ENCODE measurements at regions of chrX and their contacts with region 1.

Region 1: GRCh38 chrX:134484039-134484438 is 24.1 kb downstream of the HPRT1 start:
- DNase-seq: no peak
- H3K4me3 Mint-ChIP-seq: no peak overlapping the region
- H3K27ac Mint-ChIP-seq: no peak overlapping the region
- H3K4me1 Mint-ChIP-seq: no peaks in the 10 kb centered on the region
- H3K27me3 Mint-ChIP-seq: no peaks in the 10 kb centered on the region

Region 2: GRCh38 chrX:134764212-134764785 is 280.3 kb after region 1 on chrX:
- CTCF ChIA-PET with region 1: interaction called, 3 read pairs
- POLR2A ChIA-PET with region 1: no interaction called
- intact Hi-C with region 1: loop called (anchors 5 kb)
- DNase-seq: no peak
- H3K4me3 Mint-ChIP-seq: no peak overlapping the region
- H3K27ac Mint-ChIP-seq: no peak overlapping the region
- H3K4me1 Mint-ChIP-seq: no peaks in the 10 kb centered on the region
- H3K27me3 Mint-ChIP-seq: no peaks in the 10 kb centered on the region

Region 3: GRCh38 chrX:134782796-134783195 is 298.8 kb after region 1 on chrX:
- CTCF ChIA-PET with region 1: interaction called, 13 read pairs
- POLR2A ChIA-PET with region 1: no interaction called
- intact Hi-C with region 1: loop called (anchors 5 kb)
- DNase-seq: no peak
- H3K4me3 Mint-ChIP-seq: no peak overlapping the region
- H3K27ac Mint-ChIP-seq: no peak overlapping the region
- H3K4me1 Mint-ChIP-seq: peaks cover 2% of the 10 kb centered on the region
- H3K27me3 Mint-ChIP-seq: no peaks in the 10 kb centered on the region

Region 4: DNA sequence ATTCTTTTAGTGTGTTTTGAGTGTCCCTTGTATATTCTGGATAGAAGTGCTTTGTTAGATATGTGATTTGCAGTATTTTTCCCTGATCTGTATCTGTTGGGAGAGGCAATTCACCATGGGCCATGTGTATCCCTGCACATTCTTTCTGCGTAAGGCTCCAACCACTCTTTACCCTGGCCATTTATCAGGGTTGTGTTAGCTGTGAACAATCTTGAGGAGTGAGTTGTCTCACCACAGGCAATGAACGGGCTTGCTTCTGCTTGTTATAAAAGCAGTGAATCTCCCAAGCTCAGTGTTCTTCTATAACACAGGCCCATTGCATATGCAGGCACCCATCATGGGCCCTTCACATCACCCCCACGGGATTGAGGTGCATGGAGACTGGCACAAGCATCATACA is 487.9 kb after region 1 on chrX:
- CTCF ChIA-PET with region 1: no interaction called
- POLR2A ChIA-PET with region 1: no interaction called
- intact Hi-C with region 1: no loop called
- DNase-seq: no peak
- H3K4me3 Mint-ChIP-seq: no peak overlapping the region
- H3K27ac Mint-ChIP-seq: no peak overlapping the region
- H3K4me1 Mint-ChIP-seq: no peaks in the 10 kb centered on the region
- H3K27me3 Mint-ChIP-seq: no peaks in the 10 kb centered on the region